T-cell (primary cell): ENCODE measurements at regions of chr18 and their contacts with region 1.

Region 1: GRCh38 chr18:69944436-69944835 is 3.2 kb downstream of the CD226 start:
- DNase-seq: peak in 1 of 35 experiments; percentile 36
- ATAC-seq: peak in 1 of 4 experiments; percentile 28
- H3K4me3 ChIP-seq: peak overlapping the region; percentile 2 to 45
- H3K4me3 Mint-ChIP-seq: peak overlapping the region in 1 of 3 donors; percentile 83
- H3K27ac ChIP-seq: peak overlapping the region; percentile 78
- H3K27ac Mint-ChIP-seq: no peak overlapping the region
- H3K4me1 ChIP-seq: peaks cover 57 to 62% of the 10 kb centered on the region in 2 experiments
- H3K4me1 Mint-ChIP-seq: peaks cover 12 to 22% (median 21%) of the 10 kb centered on the region in 3 donors
- H3K27me3 ChIP-seq: no peaks in the 10 kb centered on the region
- H3K27me3 Mint-ChIP-seq: no peaks in the 10 kb centered on the region

Region 2: DNA sequence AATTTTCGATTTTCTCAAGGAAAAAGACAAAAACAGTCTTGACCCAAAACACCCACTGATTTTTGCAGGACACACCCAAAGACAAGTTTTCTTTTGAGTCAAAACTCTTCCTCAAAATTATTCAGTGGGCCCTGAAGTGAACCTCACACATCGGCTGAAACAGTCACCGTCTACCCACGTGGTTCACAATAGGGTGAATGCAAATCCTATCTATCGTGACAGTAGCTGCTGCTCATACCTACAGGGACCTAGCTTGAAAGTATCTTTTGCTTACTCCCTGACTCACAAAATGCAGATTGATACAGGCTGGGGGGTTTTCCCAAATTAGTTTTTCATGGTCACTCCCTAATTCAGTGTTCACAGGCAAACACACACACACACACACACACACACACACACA is 14.0 kb after region 1 on chr18:
- CTCF ChIA-PET with region 1: interaction called, 7 to 12 read pairs
- POLR2A ChIA-PET with region 1: interaction called, 5 to 9 read pairs
- DNase-seq: peak in 1 of 35 experiments; percentile 50
- ATAC-seq: no peak
- H3K4me3 ChIP-seq: no peak overlapping the region
- H3K4me3 Mint-ChIP-seq: no peak overlapping the region
- H3K27ac ChIP-seq: peak overlapping the region; percentile 80
- H3K27ac Mint-ChIP-seq: no peak overlapping the region
- H3K4me1 ChIP-seq: peaks cover 35 to 36% of the 10 kb centered on the region in 2 experiments
- H3K4me1 Mint-ChIP-seq: peaks cover 15 to 20% (median 17%) of the 10 kb centered on the region in 3 donors
- H3K27me3 ChIP-seq: no peaks in the 10 kb centered on the region
- H3K27me3 Mint-ChIP-seq: no peaks in the 10 kb centered on the region